CD14-positive monocyte (primary cell): ENCODE measurements at regions of chr1 and their contacts with region 1.

Region 1: DNA sequence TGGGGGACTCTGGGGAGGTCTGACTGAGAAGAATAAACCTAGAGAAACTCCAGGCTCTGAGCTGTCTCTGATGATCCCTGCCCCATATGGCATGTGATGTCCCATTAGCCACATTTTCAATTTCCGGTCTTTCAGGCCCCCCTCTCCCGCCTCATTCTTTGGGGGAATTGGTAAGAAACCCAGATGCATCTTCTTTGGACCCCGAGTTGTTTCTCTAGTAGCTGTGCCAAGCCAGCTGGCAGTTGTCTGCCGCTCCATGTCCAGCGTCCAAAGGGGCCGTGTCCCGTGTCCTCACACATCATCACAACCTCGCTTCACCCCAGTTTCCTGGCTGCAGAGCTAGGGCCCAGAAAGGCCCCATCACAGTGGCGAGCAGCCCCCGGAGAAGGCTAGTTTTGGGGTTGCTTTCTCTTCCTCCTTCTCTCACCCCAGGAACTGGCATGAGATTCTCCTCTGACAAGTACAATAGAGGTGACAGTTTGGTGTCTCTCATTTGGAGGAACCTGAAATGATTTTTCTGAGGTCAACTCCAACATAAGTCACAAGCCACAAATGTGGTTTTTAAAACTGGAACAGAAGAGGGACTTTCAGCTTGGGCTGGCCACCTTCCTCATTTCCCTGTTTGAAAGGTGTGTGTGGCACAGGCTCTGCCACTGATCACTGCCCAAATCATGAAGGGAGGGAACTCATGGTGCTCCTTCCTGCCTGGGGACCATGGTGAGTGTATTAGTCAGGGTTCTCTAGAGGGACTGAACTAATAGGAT is 6.4 kb upstream of the GPR157 start:
- DNase-seq: peak; percentile 40 to 69 (median 47)
- H3K4me3 ChIP-seq: no peak overlapping the region
- H3K4me3 Mint-ChIP-seq: peak overlapping the region in 1 of 2 donors; percentile 35
- H3K27ac ChIP-seq: no peak overlapping the region
- H3K27ac Mint-ChIP-seq: peak overlapping the region in 5 of 7 donors; percentile 16 to 84 (median 68)
- H3K4me1 ChIP-seq: peaks cover 15 to 26% of the 10 kb centered on the region in 2 donors
- H3K4me1 Mint-ChIP-seq: peaks cover 20% of the 10 kb centered on the region
- H3K27me3 ChIP-seq: peaks cover 2 to 11% of the 10 kb centered on the region in 2 donors
- H3K27me3 Mint-ChIP-seq: peaks cover 16 to 33% (median 22%) of the 10 kb centered on the region in 3 donors
- CTCF ChIP-seq: no peak

Region 2: GRCh38 chr1:9181176-9181906 is 46.1 kb after region 1 on chr1:
- intact Hi-C with region 1: loop called in 1 of 2 experiments (anchors 5 kb)
- DNase-seq: peak; percentile 29 to 59 (median 47)
- H3K4me3 ChIP-seq: peak overlapping the region; percentile 18 to 75 (median 29)
- H3K4me3 Mint-ChIP-seq: peak overlapping the region; percentile 74 to 93
- H3K27ac ChIP-seq: no peak overlapping the region
- H3K27ac Mint-ChIP-seq: peak overlapping the region in 1 of 7 donors; percentile 81
- H3K4me1 ChIP-seq: peaks cover 36 to 46% of the 10 kb centered on the region in 2 donors
- H3K4me1 Mint-ChIP-seq: peaks cover 31% of the 10 kb centered on the region
- H3K27me3 ChIP-seq: peaks cover 11 to 44% of the 10 kb centered on the region in 2 donors
- H3K27me3 Mint-ChIP-seq: peaks cover 24 to 56% (median 46%) of the 10 kb centered on the region in 3 donors
- CTCF ChIP-seq: peak; percentile 99